ENCODE measurements at regions of chr11 and their contacts with region 1.

Region 1: DNA sequence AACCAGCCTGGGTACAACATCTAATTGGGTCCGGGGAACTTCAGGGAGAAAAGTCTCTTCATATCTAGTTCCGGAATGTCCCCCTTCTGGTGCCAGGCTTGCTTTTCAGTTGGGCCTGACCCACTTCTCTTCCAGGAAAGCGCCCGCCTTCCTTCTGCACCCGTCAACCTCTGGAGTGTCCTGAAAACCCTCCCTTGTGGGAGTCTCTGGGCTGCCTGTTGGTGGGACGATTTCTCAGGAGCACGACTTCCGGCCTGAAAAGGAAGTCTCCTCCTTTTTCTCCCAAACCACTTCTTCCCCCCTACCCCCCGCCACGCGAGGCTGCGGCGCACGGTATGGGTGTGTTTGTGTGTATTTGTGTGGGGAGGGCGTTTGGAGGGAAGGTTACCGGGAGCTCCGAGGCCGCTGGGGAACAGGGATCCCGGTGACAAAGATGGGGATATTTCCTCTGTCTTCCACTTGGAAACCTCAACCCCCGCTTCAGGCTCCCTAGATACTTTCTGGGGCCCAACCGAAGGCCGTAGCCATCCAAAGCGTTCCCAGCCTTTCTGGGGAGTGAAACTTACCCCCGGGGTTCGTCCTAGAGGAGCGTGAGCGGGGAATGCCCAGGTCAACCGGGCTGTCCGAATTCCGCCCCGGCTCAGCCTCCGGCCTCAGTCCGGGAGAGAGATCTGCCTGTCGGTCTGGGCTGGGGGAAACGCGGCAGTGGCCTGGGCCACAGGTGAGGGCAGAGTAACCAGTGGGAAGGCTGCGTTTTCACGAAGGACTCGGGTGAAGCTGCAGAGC is at the start of gene NKAPD1:
- DNase-seq: peak; percentile 60
- H3K4me3 Mint-ChIP-seq: peak within 1 kb of the TSS; percentile 88
- H3K27ac Mint-ChIP-seq: peak within 1 kb of the TSS; percentile 95
- H3K4me1 Mint-ChIP-seq: peaks cover 17% of the 10 kb centered on the region
- H3K27me3 Mint-ChIP-seq: no peaks in the 10 kb centered on the region
- CTCF ChIP-seq: no peak
- total RNA-seq, gene NKAPD1: 13.0 and 14.7 TPM in 2 replicates

Region 2: DNA sequence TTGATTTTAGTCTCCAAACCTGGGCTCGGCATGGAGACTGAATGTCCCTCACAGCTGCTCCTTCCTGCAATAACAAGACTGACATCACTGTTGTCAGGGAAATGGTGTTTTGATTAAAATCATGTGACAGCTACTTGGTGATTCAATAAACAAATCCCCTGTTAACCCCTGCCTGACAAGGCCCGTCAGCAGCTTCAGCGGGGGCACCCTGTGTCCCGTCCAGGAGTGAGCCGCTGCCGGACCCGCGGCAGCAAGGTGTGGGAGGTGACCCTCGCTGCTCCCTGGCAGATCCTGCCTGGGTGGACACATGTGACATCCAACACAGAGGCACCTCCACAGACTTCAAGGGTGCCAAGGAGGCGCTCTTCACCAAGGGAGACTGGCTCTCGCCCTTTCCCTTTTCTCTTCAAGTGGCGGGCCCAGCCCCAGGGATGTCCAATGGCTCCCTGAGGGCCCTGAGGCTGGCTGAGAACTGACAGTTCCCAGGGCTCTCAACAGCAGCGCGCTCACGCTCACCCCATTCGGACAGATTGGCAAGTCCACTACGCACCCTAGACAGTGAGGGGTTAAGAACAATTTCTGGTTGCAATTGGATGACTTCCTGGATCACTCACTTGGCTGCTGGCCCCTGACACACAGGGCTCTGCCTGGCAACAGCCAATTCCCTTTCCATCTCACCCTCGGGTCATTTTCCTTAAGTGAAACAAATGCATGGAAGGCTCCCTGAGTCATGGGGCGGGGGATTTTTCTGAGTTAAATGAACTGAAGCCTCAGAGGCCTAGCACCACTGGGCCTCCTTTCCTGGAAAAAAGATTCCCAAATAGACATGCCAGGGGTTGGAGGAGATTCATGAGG is 338.7 kb before region 1 on chr11:
- CTCF ChIA-PET with region 1: no interaction called
- intact Hi-C with region 1: no loop called
- DNase-seq: no peak
- H3K4me3 Mint-ChIP-seq: no peak overlapping the region
- H3K27ac Mint-ChIP-seq: no peak overlapping the region
- H3K4me1 Mint-ChIP-seq: no peaks in the 10 kb centered on the region
- H3K27me3 Mint-ChIP-seq: no peaks in the 10 kb centered on the region
- CTCF ChIP-seq: no peak

Region 3: DNA sequence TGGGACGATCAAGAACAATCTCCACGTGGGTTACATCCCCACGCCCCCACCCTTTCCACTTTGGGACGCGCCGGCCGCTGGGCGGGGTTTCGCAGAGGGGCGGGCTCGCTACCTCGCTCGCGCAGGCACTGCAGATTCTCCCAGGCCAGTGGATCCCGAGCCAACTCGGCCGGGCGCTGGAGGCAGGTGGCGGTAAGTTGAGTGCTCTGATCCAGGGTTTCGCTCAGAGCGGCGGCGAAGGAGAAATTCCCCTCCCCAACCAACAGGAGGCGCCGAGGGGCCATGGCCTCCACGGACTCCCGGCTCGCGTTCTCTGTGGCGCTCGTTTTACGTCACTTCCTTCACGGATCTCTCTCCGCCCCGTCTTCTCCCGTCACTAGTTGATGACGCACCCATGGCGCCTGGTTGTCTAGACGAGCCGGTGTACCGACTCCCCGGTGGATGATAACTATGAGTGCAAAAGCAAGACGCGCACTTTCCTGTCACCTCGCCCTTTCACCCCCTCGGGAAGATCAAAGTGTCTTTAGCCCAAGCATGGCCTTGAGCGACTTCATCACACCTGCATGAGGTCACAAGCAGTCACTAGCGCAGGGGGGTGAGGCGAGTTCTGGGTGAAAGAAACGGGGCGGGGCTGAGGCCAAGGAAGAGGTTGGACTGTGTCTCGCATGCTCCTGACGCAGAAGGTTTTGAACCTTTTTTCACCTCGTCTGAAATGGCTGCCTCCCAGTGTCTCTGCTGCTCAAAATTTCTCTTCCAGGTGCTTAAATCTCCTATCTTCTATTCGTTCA is 195.2 kb before region 1 on chr11 and contains the starts of genes CFAP68 and FDXACB1:
- CTCF ChIA-PET with region 1: no interaction called
- intact Hi-C with region 1: loop called (anchors 10 kb)
- DNase-seq: peak; percentile 93
- H3K4me3 Mint-ChIP-seq: peak within 1 kb of the TSS; percentile 80
- H3K27ac Mint-ChIP-seq: peak within 1 kb of the TSS; percentile 93
- H3K4me1 Mint-ChIP-seq: peaks cover 9% of the 10 kb centered on the region
- H3K27me3 Mint-ChIP-seq: no peaks in the 10 kb centered on the region
- CTCF ChIP-seq: peak; percentile 78
- total RNA-seq, gene CFAP68: 28.1 and 29.8 TPM in 2 replicates
- total RNA-seq, gene FDXACB1: 1.7 and 1.8 TPM in 2 replicates

Measured in Calu3 (cell line).